SK-N-SH (cell line): ENCODE measurements at regions of chr4 and their contacts with region 1.

Region 1: DNA sequence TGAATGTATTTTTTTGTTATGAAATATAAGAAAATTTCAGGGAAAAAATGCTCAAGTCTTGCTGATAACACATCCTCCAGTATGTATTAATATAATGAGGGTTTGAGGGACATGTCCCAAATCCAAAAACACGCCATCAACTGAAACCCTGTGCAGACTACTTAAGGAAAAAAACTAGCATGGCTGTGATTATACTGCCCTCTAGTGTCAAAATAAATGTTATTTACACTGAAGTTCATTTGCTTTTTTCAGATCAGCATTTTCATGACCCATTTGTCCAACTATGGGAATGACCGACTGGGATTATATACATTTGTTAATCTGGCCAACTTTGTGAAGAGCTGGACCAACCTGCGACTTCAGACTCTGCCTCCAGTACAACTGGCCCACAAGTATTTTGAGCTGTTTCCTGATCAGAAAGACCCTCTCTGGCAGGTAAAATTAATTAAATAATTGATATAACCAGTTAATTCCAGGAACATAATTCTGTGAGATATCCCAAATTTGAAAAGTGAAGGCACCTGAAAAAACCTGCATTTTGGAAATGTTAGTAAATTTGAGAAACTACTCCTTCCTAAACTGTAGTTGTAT is 128.5 kb downstream of the PRSS12 start:
- DNase-seq: peak; percentile 30
- H3K4me3 ChIP-seq: peak overlapping the region in 1 of 2 experiments; percentile 14; a peak in 1 of 4 replicates
- H3K27ac ChIP-seq: no peak overlapping the region
- H3K4me1 ChIP-seq: no peaks in the 10 kb centered on the region; a peak in 2 of 4 replicates
- H3K27me3 ChIP-seq: no peaks in the 10 kb centered on the region
- CTCF ChIP-seq: peak; percentile 75
- EP300 ChIP-seq: no peak
- RAD21 ChIP-seq: peak; percentile 90

Region 2: GRCh38 chr4:117134386-117134785 is 1089.9 kb before region 1 on chr4:
- CTCF ChIA-PET with region 1: interaction called, 11 read pairs
- POLR2A ChIA-PET with region 1: no interaction called
- DNase-seq: peak; percentile 30
- H3K4me3 ChIP-seq: no peak overlapping the region
- H3K27ac ChIP-seq: no peak overlapping the region
- H3K4me1 ChIP-seq: no peaks in the 10 kb centered on the region; a peak in 1 of 4 replicates
- H3K27me3 ChIP-seq: no peaks in the 10 kb centered on the region
- CTCF ChIP-seq: peak; percentile 73
- EP300 ChIP-seq: no peak
- RAD21 ChIP-seq: peak; percentile 95

Region 3: GRCh38 chr4:118076958-118077766 is 147.2 kb before region 1 on chr4:
- CTCF ChIA-PET with region 1: interaction called, 18 read pairs
- POLR2A ChIA-PET with region 1: no interaction called
- DNase-seq: peak; percentile 24
- H3K4me3 ChIP-seq: no peak overlapping the region
- H3K27ac ChIP-seq: no peak overlapping the region
- H3K4me1 ChIP-seq: no peaks in the 10 kb centered on the region
- H3K27me3 ChIP-seq: no peaks in the 10 kb centered on the region
- CTCF ChIP-seq: peak; percentile 68
- EP300 ChIP-seq: no peak
- RAD21 ChIP-seq: peak; percentile 49

Region 4: GRCh38 chr4:118213101-118213500 is 11.2 kb before region 1 on chr4:
- CTCF ChIA-PET with region 1: interaction called, 27 read pairs
- POLR2A ChIA-PET with region 1: no interaction called
- DNase-seq: no peak
- H3K4me3 ChIP-seq: no peak overlapping the region
- H3K27ac ChIP-seq: no peak overlapping the region
- H3K4me1 ChIP-seq: no peaks in the 10 kb centered on the region
- H3K27me3 ChIP-seq: no peaks in the 10 kb centered on the region
- CTCF ChIP-seq: no peak
- EP300 ChIP-seq: no peak
- RAD21 ChIP-seq: no peak

Region 5: DNA sequence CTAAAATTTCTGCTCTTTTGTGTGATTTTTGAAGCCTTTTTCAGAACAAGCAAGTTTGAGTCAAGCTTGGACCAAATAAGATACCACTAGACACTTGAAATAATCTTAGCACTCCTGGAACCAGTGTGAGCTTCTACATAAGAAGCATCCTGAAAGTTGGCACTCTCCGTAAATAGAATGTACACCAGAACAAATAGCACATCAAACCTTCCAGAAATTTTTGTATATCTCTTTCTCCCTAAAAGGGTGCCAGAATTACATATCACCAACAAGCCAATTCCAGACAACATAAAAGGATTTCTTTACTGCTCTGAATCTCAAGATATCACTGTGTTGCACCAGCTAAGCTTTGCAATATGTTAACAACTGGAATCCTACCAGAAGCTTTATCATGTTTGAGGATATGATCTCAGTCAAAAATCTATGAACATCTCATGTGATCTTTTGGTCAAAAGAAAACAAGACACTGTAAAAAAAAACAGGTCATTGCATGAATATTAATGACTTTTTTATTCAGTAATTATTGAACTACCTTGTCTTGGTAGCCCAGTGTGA is 11.3 kb after region 1 on chr4:
- CTCF ChIA-PET with region 1: interaction called, 11 read pairs
- POLR2A ChIA-PET with region 1: no interaction called
- DNase-seq: no peak
- H3K4me3 ChIP-seq: no peak overlapping the region
- H3K27ac ChIP-seq: no peak overlapping the region
- H3K4me1 ChIP-seq: no peaks in the 10 kb centered on the region
- H3K27me3 ChIP-seq: no peaks in the 10 kb centered on the region
- CTCF ChIP-seq: no peak
- EP300 ChIP-seq: no peak
- RAD21 ChIP-seq: no peak

Region 6: DNA sequence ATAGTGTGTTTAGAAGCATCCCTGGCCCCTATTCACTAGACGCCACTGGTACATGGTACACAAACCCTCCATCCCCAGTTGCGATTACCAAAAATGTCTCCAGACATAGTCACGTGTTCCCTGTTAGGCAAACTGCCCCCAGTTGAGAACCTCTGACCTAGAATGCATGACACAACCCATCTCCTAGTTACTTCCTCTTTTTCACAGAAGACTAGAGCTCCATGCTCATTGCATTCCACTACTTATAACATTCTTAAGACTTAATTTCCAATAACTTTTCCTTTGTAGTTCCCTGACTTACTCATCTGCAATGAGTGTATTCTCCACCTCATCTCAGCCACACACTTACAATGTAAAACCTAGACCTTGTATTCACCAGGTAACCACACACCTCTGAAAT is 59.8 kb after region 1 on chr4:
- CTCF ChIA-PET with region 1: no interaction called
- POLR2A ChIA-PET with region 1: no interaction called
- DNase-seq: no peak
- H3K4me3 ChIP-seq: no peak overlapping the region
- H3K27ac ChIP-seq: no peak overlapping the region
- H3K4me1 ChIP-seq: peaks cover 10 to 39% of the 10 kb centered on the region in 2 experiments
- H3K27me3 ChIP-seq: no peaks in the 10 kb centered on the region
- CTCF ChIP-seq: no peak
- EP300 ChIP-seq: no peak
- RAD21 ChIP-seq: no peak